Activated CD4-positive, alpha-beta T cell treated with anti-CD3 and anti-CD28 coated beads, Interleukin-2, amount 10 ng/mL, durations not matched to agents 7 days and 5 days (primary cell): ENCODE measurements at regions of chr15 and their contacts with region 1.

Region 1: GRCh38 chr15:70635895-70636294 is 127.5 kb downstream of the UACA start:
- DNase-seq: no peak
- H3K4me3 Mint-ChIP-seq: no peak overlapping the region
- H3K27ac Mint-ChIP-seq: no peak overlapping the region
- H3K4me1 Mint-ChIP-seq: peaks cover 7% of the 10 kb centered on the region
- H3K27me3 Mint-ChIP-seq: peaks cover 23% of the 10 kb centered on the region

Region 2: GRCh38 chr15:70650567-70651302 is 14.8 kb after region 1 on chr15:
- CTCF ChIA-PET with region 1: no interaction called
- POLR2A ChIA-PET with region 1: no interaction called
- DNase-seq: no peak
- H3K4me3 Mint-ChIP-seq: no peak overlapping the region
- H3K27ac Mint-ChIP-seq: no peak overlapping the region
- H3K4me1 Mint-ChIP-seq: no peaks in the 10 kb centered on the region
- H3K27me3 Mint-ChIP-seq: peaks cover 24% of the 10 kb centered on the region

Region 3: DNA sequence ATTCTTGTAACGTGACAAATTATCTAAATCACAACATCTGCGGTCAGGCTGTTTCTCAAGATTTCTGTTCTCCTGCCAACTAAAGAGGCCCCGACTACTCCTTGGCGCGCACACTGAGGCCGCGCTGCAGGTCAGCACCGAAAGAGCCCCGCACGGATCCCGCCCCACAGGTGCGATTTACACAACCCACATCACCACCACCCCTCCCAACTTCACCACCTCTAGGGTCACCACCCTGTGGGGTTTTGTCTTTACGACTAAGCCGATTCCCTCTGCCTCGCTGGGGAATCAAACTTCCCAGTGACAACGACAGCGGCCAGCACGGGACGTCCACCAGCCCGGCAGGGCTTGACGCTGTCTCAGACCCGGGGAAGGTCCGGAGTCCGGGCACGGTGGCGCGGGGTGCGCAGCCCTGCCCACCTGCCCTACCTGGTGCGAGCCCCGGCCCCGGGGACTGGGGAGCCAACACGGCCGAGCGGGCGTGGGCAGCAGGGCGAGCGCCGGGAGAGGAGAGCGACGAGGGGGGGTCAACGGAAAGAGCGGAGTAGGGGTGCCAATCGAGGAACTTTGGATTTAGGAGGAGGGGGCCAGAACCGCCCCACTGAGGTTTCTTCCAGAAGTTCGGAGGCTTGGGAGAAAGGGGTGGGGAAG is 126.7 kb after region 1 on chr15:
- CTCF ChIA-PET with region 1: no interaction called
- POLR2A ChIA-PET with region 1: interaction called, 10 read pairs
- DNase-seq: no peak
- H3K4me3 Mint-ChIP-seq: peak overlapping the region; percentile 79
- H3K27ac Mint-ChIP-seq: no peak overlapping the region
- H3K4me1 Mint-ChIP-seq: peaks cover 18% of the 10 kb centered on the region
- H3K27me3 Mint-ChIP-seq: peaks cover 53% of the 10 kb centered on the region